HEK293T (cell line): ENCODE measurements at regions of chr5 and their contacts with region 1.

Region 1: GRCh38 chr5:148290271-148291195 is 21.7 kb upstream of the SPINK7 start:
- DNase-seq: peak; percentile 10

Region 2: GRCh38 chr5:147939033-147939772 is 351.3 kb before region 1 on chr5:
- CTCF ChIA-PET with region 1: no interaction called
- POLR2A ChIA-PET with region 1: no interaction called
- DNase-seq: no peak

Region 3: GRCh38 chr5:148374692-148375360 is 84.3 kb after region 1 on chr5:
- CTCF ChIA-PET with region 1: interaction called, 22 read pairs
- POLR2A ChIA-PET with region 1: no interaction called
- DNase-seq: peak; percentile 56